MCF 10A (cell line): ENCODE measurements at regions of chr10 and their contacts with region 1.

Region 1: GRCh38 chr10:69061305-69062161 is 26.4 kb upstream of the SRGN start:
- DNase-seq: peak; percentile 95
- H3K4me3 Mint-ChIP-seq: peak overlapping the region; percentile 75
- H3K27ac Mint-ChIP-seq: peak overlapping the region; percentile 59
- H3K4me1 Mint-ChIP-seq: peaks cover 27% of the 10 kb centered on the region
- H3K27me3 Mint-ChIP-seq: no peaks in the 10 kb centered on the region
- CTCF ChIP-seq: no peak

Region 2: DNA sequence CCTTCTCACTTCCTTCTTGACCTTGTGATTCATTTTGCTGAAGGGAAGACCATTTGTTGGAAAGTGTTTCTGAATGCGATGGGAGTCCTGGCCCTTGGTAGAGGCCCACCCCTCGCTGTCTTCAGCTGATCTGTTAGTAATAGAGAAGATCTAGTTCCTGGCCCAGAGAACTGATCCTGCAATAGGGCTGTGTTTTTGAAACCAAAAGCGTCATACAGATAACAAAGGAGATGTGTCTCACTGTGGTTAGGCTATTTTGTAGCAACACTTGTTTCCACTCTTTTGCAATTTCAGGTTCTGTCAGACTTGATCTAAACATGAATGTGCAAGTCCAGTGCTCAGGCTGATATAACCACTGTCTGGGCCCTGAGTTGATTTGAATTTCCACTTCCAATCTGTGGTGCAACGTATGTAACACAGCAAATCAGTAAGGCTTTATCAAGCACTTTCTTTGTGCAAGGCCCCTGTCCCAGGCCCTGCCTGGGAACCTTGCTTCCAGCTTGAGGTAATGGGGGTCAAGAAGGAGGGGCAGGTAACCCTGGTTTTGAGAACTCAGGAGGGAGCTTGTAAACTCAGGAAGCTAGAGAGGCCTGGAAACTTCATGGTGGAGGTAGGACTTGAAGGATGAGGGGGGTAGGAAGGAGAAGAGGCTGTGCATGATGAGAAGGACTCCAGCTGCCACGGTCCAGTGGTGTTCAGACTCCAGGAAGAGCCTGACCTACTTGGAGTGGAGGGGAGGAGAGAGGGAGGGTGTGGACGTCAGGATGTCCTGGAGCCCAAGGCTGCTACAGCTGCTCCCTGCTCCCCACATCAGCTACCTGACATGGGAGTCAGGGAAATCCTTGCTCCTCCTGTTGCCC is 15.9 kb before region 1 on chr10:
- CTCF ChIA-PET with region 1: interaction called, 4 read pairs
- POLR2A ChIA-PET with region 1: interaction called, 11 read pairs
- intact Hi-C with region 1: no loop called
- DNase-seq: peak; percentile 70
- H3K4me3 Mint-ChIP-seq: no peak overlapping the region
- H3K27ac Mint-ChIP-seq: peak overlapping the region; percentile 94
- H3K4me1 Mint-ChIP-seq: peaks cover 10% of the 10 kb centered on the region
- H3K27me3 Mint-ChIP-seq: no peaks in the 10 kb centered on the region
- CTCF ChIP-seq: no peak

Region 3: DNA sequence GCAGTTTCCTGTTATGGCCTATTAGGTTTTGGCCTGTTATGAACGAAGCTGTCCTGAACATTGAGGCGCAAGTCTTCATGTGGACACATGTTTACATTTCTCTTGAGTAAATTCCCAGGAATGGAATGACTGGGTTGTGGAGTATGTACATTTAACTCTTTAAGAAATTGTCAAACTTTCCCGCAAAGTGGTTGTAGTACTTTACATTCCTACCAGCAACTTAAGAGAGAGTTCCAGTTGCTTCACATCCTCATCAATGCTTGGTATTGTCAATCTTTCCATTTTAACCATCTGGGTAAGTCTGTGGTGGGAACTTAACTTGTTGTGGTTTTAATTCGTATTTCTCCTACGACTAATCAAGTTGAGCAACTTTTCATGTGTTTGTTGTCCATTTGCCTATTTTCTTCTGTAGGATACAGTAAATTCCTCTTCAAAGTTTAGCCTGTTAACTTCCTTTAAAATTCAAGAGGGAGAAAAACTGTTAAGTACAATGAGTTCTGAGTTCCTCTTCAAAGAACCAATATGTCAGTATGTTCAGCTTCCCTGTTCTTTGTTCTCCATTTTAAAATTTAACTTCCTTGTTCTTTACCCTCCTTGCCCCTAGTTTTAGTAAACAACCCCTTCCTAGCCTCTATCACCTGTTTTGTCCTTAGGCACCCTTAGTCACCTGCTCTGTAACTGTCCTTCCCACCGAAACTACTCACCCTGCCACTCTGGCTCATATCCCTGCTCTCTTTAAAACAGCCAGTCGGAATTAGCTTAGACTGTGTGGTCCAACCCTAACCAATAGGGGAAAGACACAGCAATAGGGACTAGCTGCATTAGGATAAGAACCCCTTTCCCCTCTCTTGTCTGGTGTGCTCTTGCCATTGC is 642.5 kb after region 1 on chr10:
- CTCF ChIA-PET with region 1: no interaction called
- POLR2A ChIA-PET with region 1: no interaction called
- intact Hi-C with region 1: no loop called
- DNase-seq: peak; percentile 84
- H3K4me3 Mint-ChIP-seq: no peak overlapping the region
- H3K27ac Mint-ChIP-seq: peak overlapping the region; percentile 67
- H3K4me1 Mint-ChIP-seq: peaks cover 16% of the 10 kb centered on the region
- H3K27me3 Mint-ChIP-seq: peaks cover 37% of the 10 kb centered on the region
- CTCF ChIP-seq: no peak